Sciatic nerve (tissue), 2 donors: ENCODE measurements at regions of chr15 and their contacts with region 1.

Region 1: DNA sequence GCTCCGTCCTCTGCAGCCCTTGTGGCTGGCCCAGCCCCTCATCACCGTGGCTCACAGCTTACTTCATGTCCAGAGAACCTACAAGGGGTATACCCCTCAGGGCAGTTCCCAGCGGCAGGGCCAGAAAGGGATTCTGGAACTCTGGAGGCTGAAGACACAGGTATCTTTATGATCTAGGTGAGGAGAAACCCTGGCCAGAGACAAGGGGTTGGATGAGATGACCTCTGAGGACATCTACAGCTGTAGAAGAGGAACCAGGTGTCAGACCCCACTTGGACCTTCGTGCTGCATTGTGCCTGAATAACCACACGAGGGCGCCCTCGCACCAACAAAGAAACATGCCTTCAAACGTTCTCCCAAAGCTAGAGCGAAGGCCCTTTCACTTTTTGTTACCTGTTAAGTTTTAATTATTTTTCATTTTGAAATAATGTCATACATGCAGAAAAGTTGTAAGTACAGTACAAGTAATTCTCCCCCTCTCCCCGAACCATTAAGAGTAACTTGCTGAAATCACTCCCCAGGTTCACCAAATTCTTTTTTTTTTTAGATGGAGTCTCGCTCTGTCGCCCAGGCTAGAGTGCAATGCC is 118.7 kb upstream of the SMAD3 start:
- DNase-seq: peak; percentile 83
- ATAC-seq: peak; percentile 72

Region 2: DNA sequence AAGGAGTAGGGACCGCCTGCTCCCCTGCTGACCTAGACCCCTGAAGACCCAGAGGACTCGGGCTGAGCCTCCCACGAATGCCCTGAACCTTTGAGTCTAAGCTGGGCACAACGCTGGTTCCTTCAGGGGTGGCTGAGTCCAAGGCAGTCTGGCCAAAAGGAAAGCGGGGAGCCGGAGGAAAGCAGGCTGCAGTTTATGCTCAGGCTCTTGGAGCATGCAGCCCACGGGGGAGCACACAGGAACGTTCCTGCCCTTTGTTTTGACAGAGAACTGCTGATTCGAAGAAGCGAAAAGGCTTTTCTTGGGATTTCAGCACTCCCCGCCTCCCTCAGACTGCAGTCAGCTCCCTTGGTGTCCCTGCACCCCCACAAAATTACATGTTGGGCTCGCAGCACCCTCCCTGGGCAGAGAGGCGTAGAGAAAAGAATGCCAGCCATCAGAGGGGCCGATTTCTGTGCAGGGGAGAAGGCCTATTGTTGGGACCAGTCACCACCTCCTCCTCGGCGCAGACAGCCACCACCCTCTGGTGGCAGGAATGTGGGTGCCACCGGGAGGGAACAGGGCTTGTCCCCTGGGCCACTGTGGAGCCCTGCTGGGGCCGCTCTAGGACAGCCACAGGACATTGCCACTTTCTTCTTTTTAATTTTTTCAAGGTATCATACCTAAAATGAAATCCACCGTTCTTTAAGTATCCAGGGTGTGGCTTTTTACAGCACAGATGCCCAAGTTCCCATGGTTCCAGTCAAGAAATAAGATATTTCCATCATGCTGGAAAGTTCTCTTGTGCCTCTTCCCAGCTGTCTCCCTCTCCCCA is 172.5 kb before region 1 on chr15:
- intact Hi-C with region 1: no loop called
- DNase-seq: peak; percentile 92
- ATAC-seq: peak; percentile 92

Region 3: GRCh38 chr15:67065444-67066093 is 118.9 kb after region 1 on chr15 and contains the start of gene SMAD3:
- intact Hi-C with region 1: no loop called
- DNase-seq: peak; percentile 94
- ATAC-seq: peak; percentile 90
- total RNA-seq, gene SMAD3: 58.8 TPM

Region 4: GRCh38 chr15:67311731-67312130 is 365.1 kb after region 1 on chr15:
- intact Hi-C with region 1: loop called (anchors 10 kb)
- DNase-seq: no peak
- ATAC-seq: no peak

Region 5: GRCh38 chr15:67839929-67840748 is 893.5 kb after region 1 on chr15 and contains the start of gene RNU6-1:
- intact Hi-C with region 1: loop called (anchors 5 kb)
- DNase-seq: peak; percentile 96
- ATAC-seq: peak; percentile 95
- total RNA-seq, gene RNU6-1: not detected